ENCODE measurements at regions of chr16 and their contacts with region 1.

Region 1: GRCh38 chr16:81723098-81723723 is 55.9 kb upstream of the PLCG2 start:
- DNase-seq: peak; percentile 90
- H3K4me3 ChIP-seq: no peak overlapping the region
- H3K27ac ChIP-seq: no peak overlapping the region
- H3K4me1 ChIP-seq: no peaks in the 10 kb centered on the region
- H3K27me3 ChIP-seq: no peaks in the 10 kb centered on the region
- CTCF ChIP-seq: peak; percentile 65

Region 2: DNA sequence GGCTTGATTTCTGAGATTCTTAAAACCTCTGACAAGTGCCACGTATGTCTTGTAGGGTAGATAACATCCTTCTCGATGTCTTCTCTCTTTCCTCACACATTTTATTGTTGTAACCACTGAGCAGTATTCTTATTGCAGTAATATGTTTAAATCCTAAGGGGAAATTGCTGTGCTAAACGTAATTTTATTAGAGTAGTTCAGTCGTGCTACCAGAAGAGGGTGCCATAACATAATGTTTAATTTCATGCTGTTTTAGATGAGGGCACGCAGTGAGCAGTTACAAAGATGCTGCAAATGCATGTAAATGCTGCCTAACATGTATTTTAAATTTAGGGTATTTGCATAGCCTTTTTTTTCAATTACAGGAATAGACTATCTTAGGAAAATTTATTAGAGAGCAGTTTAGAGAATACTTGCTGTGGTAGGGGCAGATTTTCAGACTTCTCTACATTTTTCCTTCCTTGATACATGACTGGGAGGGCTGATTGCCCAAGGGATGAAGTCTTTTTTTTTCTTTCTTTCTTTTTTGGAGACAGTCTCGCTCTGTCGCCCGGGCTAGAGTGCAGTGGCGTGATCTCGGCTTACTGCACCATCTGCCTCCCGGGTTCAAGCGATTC is 356.8 kb before region 1 on chr16:
- CTCF ChIA-PET with region 1: no interaction called
- POLR2A ChIA-PET with region 1: no interaction called
- intact Hi-C with region 1: loop called (anchors 1 kb)
- DNase-seq: peak; percentile 60
- H3K4me3 ChIP-seq: no peak overlapping the region
- H3K27ac ChIP-seq: no peak overlapping the region
- H3K4me1 ChIP-seq: no peaks in the 10 kb centered on the region
- H3K27me3 ChIP-seq: no peaks in the 10 kb centered on the region
- CTCF ChIP-seq: peak; percentile 75

Region 3: GRCh38 chr16:81403616-81404373 is 319.4 kb before region 1 on chr16:
- CTCF ChIA-PET with region 1: interaction called, 8 read pairs
- POLR2A ChIA-PET with region 1: no interaction called
- intact Hi-C with region 1: loop called (anchors 1 kb)
- DNase-seq: peak; percentile 83
- H3K4me3 ChIP-seq: peak overlapping the region; percentile 40
- H3K27ac ChIP-seq: no peak overlapping the region
- H3K4me1 ChIP-seq: no peaks in the 10 kb centered on the region
- H3K27me3 ChIP-seq: no peaks in the 10 kb centered on the region
- CTCF ChIP-seq: peak; percentile 94

Region 4: DNA sequence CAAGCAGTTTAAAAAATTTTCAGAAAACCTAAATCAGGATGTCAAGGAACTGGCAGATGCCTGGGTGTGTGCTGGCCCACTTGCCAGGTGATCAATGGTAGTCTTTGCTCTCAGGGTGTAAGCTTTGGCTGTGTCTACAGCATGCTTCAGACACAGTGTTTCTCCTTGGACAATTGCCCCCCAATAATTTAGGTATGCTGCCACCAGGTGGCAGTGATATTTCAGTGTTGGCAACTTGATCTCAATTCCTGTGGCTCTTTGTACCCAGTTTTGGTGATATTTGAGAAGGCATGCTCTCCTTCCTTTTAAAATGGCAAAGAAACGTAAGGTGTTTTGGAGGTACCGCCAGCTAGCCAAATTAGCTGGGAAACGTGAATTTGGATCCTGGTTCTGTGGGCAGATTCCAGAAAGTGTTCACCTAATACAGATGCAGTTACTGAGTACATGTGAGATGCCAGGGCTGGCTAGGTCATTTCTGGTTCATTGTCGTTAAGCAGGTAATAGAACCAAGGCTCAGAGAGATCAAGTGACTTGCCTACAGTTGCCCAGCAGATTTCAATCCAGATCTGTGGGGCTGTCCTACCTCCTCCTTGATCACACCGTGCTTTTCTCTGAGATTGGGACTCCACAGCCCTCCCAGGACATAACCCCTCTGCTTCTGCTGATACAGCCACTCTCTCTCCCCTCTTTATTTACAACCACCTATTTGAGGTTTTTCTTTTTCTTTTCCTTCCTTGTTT is 99.7 kb before region 1 on chr16:
- CTCF ChIA-PET with region 1: interaction called, 4 read pairs
- POLR2A ChIA-PET with region 1: no interaction called
- intact Hi-C with region 1: loop called (anchors 1 kb)
- DNase-seq: peak; percentile 60
- H3K4me3 ChIP-seq: no peak overlapping the region
- H3K27ac ChIP-seq: no peak overlapping the region
- H3K4me1 ChIP-seq: no peaks in the 10 kb centered on the region
- H3K27me3 ChIP-seq: no peaks in the 10 kb centered on the region
- CTCF ChIP-seq: peak; percentile 68

Measured in A673 (cell line).